ENCODE measurements at regions of chr12 and their contacts with region 1.

Region 1: DNA sequence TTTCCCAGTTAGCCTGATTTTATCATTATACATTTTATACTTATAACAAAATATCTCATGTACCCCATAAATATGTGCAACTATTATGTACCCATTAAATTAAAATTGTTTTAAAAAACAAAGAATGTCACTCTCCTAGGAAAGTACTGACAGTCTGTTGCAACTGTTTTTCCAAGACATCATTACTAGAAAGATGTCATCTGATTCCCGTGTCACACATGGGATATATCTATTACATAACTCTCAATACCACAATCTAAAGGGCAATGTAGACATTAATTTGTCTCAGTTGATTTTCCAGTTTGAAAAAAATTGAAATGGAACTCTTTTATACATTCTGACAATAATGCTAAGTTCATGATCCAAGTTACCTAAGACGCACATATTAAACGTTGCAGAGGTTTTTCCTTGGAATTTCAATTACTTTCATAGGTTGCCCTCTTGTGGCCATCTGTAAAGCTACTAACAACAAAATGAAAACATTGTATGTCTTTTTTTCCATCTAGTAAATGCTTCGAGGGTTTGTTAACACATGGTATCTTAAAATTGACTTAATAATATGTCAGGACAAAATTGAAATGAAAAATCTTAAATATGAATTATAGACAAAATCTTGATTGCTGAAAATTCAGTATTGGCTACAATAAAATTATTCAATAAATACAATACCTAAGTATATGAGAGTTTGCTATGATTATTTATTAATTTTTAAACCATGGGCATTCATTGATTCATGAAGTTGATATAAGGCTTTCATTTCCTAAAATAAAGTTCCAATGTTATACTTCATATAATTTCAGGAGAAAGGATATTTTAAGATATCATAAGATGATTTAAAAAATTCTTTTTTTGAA is 131.6 kb downstream of the PPFIA2 start:
- DNase-seq: no peak
- H3K4me3 Mint-ChIP-seq: no peak overlapping the region
- H3K27ac Mint-ChIP-seq: no peak overlapping the region
- H3K4me1 Mint-ChIP-seq: no peaks in the 10 kb centered on the region
- H3K27me3 Mint-ChIP-seq: peaks cover 2% of the 10 kb centered on the region

Region 2: GRCh38 chr12:81268664-81268926 is 359.0 kb before region 1 on chr12:
- CTCF ChIA-PET with region 1: no interaction called
- intact Hi-C with region 1: loop called (anchors 5 kb)
- DNase-seq: no peak
- H3K4me3 Mint-ChIP-seq: no peak overlapping the region
- H3K27ac Mint-ChIP-seq: no peak overlapping the region
- H3K4me1 Mint-ChIP-seq: no peaks in the 10 kb centered on the region
- H3K27me3 Mint-ChIP-seq: no peaks in the 10 kb centered on the region

Region 3: DNA sequence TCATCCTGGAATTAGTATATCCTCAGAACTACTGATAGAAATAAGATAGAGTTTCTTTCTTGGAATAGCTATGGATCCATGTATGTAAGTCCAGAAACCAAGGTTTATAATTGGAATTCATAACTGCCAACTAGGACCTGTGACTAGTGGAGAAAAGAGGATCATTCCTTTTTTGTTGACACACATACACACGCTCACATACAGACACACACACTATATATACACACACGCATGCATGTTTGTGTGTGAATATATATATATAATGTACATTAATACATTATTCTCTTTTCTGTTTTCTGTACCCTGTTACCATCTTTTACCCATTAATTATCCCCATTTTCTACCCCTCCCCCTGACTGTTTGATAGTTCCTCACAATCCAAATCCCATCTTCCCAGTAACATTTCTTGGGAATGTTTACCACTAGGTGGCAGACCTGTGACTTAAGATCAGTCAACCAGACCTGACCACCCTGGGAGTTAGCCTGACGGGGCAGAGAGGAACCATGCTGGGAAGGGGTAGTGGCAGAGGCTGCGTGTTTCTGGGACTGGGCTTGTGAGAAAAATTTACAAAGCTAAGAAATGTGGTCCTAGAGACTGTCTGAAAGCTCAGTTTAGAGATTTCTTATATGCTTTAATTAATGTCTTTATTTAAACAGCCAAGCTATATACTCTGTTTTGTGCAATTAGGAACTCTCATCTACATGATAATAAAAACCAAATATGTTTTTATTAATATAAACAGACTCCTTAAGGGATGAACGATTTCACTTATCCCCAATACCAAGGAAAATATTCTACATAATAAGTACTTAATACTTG is 176.4 kb before region 1 on chr12:
- CTCF ChIA-PET with region 1: no interaction called
- intact Hi-C with region 1: loop called (anchors 2 kb)
- DNase-seq: peak; percentile 8
- H3K4me3 Mint-ChIP-seq: no peak overlapping the region
- H3K27ac Mint-ChIP-seq: no peak overlapping the region
- H3K4me1 Mint-ChIP-seq: no peaks in the 10 kb centered on the region
- H3K27me3 Mint-ChIP-seq: no peaks in the 10 kb centered on the region

Region 4: GRCh38 chr12:81809829-81810595 is 182.4 kb after region 1 on chr12:
- CTCF ChIA-PET with region 1: no interaction called
- intact Hi-C with region 1: no loop called
- DNase-seq: no peak
- H3K4me3 Mint-ChIP-seq: no peak overlapping the region
- H3K27ac Mint-ChIP-seq: no peak overlapping the region
- H3K4me1 Mint-ChIP-seq: peaks cover 19% of the 10 kb centered on the region
- H3K27me3 Mint-ChIP-seq: peaks cover 25% of the 10 kb centered on the region

Measured in activated naive CD4-positive, alpha-beta T cell treated with anti-CD3 and anti-CD28 coated beads for 36 hours (primary cell).